Activated CD4-positive, alpha-beta T cell treated with anti-CD3 and anti-CD28 coated beads, Interleukin-2, amount 10 ng/mL, durations not matched to agents 24 days and 14 days (primary cell): ENCODE measurements at regions of chr5 and their contacts with region 1.

Region 1: DNA sequence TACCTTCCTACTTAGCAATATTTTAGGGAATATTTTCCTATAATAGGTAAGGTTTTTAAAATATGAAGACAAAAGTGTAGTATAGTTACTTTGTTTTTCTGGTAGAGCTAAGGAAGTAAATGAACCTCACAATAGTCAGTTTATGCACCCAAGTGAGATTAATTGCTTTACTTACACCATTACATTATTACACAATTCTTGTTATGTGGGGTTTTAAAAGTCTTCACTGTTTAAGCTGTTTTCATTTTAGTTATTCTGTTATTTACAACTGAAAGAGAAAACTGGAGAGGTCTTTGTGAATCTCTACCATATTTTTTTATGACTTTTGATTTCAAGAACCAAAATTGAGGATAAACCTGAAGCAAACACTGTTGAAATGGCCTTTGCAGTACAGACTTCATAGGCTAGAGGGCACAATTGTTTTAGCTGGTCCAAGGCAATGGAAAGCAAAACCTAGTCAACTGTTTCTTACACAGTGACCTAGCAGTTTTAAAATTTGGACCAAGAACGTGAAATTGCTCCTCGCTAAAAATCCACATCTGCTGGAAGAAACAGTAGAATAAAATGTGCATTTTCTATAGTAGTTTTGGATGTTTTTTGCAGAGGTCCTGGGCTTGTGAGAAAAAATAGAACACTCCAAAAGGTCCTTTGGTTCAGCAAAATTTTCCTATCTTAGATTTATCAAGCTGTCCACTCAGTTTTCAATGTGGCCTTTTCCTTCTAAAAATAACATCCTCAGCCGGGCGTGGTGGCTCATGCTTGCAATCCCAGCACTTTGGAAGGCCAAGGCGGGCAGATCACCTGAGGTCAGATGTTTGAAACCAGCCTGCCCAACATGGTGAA is 66.4 kb upstream of the FER start:
- DNase-seq: peak; percentile 74
- H3K4me3 Mint-ChIP-seq: no peak overlapping the region
- H3K27ac Mint-ChIP-seq: no peak overlapping the region
- H3K4me1 Mint-ChIP-seq: no peaks in the 10 kb centered on the region
- H3K27me3 Mint-ChIP-seq: peaks cover 10% of the 10 kb centered on the region

Region 2: DNA sequence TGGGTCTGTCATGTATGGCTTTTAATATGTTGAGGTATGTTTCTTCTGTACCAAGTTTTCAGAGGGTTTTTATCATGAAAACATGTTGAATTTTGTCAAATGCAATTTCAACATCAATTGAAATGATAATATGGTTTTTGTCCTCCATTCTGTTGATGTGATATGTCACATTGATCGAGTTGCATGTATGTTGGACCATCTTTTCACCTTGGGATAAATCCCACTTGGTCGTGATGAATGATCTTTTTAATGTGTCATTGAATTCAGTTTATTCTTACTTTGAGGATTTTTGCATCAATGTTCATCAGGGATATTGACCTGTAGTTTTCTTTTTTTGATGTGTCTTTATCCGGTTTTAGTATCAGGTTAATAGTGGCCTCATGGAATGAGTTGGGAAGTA is 439.9 kb after region 1 on chr5:
- intact Hi-C with region 1: no loop called
- DNase-seq: no peak
- H3K4me3 Mint-ChIP-seq: no peak overlapping the region
- H3K27ac Mint-ChIP-seq: no peak overlapping the region
- H3K4me1 Mint-ChIP-seq: no peaks in the 10 kb centered on the region
- H3K27me3 Mint-ChIP-seq: no peaks in the 10 kb centered on the region

Region 3: DNA sequence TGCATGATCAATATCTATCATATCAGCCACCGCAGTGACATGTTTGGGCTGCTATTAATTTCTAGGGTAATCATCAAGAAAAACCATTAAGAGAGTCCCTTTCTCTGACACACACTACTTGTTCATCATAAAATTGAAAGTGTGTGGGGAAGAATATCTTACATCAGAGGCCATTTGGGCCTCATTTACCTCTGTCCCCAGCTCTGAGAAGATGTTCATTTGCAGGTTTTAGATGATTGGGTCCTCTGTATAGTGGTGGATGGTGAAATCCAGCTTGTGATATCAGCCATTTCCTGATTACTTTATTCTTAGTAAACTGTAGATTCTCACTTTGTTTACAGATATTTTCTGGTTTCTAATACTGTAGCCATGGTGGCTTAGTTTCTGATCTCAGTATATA is 758.3 kb after region 1 on chr5:
- intact Hi-C with region 1: loop called (anchors 2 kb)
- DNase-seq: no peak
- H3K4me3 Mint-ChIP-seq: no peak overlapping the region
- H3K27ac Mint-ChIP-seq: no peak overlapping the region
- H3K4me1 Mint-ChIP-seq: no peaks in the 10 kb centered on the region
- H3K27me3 Mint-ChIP-seq: peaks cover 14% of the 10 kb centered on the region